AG04449 (cell line): ENCODE measurements at regions of chr11 and their contacts with region 1.

Region 1: DNA sequence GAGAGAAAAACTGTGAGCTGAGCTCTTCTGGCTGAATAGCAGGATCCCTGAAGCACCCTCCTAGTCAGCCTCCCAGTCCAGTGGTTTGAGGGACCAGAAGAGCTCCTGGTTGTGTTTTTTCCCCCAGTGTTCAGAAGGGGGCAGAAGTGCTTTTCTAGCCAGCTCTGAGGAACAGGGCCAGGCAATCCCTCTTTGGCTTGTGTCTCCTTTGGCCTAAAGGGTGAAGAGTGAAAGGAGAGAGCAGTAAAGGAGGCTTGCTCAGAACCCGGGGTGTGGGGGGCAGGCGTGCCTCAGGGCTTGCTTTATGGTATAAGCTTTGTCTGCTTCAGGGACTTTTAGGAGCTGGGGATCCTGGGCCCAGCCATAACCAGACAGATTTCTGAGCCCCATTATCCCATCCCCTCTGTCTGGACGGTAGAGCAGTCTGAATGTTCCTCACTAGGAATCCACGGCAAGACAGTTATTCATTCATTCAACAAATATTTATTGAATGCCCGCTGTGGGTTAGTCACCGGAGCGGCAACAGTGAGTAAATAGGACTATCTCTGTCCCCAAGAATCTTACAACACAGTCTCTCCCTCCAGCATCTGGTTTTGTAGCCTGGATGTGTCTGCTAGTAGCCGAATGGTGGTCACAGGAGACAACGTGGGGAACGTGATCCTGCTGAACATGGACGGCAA is 14.5 kb downstream of the ACP2 start:
- DNase-seq: no peak
- H3K4me3 ChIP-seq: no peak overlapping the region
- CTCF ChIP-seq: peak; percentile 47

Region 2: GRCh38 chr11:47213985-47214564 is 20.1 kb before region 1 on chr11:
- CTCF ChIA-PET with region 1: interaction called, 26 read pairs
- POLR2A ChIA-PET with region 1: interaction called, 6 read pairs
- DNase-seq: no peak
- H3K4me3 ChIP-seq: peak overlapping the region; percentile 48
- CTCF ChIP-seq: no peak

Region 3: GRCh38 chr11:47220401-47220824 is 13.7 kb before region 1 on chr11:
- CTCF ChIA-PET with region 1: interaction called, 26 read pairs
- POLR2A ChIA-PET with region 1: interaction called, 6 read pairs
- DNase-seq: no peak
- H3K4me3 ChIP-seq: no peak overlapping the region
- CTCF ChIP-seq: no peak

Region 4: GRCh38 chr11:47248664-47249377 is 14.7 kb after region 1 on chr11 and contains the start of gene ACP2:
- CTCF ChIA-PET with region 1: interaction called, 55 read pairs
- POLR2A ChIA-PET with region 1: interaction called, 14 read pairs
- DNase-seq: no peak
- H3K4me3 ChIP-seq: peak within 1 kb of the TSS; percentile 72
- CTCF ChIP-seq: peak; percentile 48

Region 5: DNA sequence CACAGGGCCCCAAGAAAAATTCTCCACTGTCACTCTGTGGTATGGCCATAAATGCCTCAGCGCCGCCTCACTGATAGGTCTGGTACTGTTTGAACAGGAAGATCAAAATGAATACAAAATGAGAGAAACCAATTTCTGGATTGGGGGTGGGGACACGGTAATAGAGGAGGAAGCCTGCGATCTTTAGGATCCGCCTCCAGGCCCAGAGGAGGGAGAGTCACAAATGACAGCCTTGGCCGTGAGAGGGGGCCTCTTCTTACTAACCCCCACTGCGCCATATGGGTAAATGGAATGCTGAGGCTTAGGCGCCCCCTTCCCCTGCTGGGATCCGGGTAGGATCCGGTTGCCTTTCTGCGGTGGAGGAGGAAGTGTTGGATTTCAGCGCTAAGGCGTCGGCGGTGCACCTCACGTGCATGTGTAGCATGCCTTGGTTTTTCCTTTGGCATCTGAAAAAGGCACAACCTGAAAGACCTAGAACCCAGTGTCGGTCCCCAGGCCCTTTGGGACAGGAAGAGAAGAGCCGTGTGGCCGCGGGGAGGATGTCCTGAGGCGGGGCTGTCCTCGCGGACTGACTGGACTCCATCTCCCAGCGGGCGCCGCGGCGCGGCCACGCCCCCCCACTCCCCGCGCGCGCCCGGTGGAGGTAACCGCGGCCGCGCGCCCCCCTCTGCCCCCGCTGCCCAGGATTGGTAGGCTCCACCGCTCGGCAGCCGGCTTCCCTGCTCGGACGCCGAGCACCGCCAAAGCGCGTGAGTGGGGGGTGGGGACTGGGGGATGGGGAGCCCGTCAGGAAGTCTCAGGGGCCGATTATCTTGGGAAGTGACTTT is 35.1 kb after region 1 on chr11:
- CTCF ChIA-PET with region 1: interaction called, 10 read pairs
- POLR2A ChIA-PET with region 1: no interaction called
- DNase-seq: peak; percentile 44
- H3K4me3 ChIP-seq: peak overlapping the region; percentile 75
- CTCF ChIP-seq: peak; percentile 11